Left cardiac atrium (tissue), 4 donors: ENCODE measurements at regions of chr20 and their contacts with region 1.

Region 1: DNA sequence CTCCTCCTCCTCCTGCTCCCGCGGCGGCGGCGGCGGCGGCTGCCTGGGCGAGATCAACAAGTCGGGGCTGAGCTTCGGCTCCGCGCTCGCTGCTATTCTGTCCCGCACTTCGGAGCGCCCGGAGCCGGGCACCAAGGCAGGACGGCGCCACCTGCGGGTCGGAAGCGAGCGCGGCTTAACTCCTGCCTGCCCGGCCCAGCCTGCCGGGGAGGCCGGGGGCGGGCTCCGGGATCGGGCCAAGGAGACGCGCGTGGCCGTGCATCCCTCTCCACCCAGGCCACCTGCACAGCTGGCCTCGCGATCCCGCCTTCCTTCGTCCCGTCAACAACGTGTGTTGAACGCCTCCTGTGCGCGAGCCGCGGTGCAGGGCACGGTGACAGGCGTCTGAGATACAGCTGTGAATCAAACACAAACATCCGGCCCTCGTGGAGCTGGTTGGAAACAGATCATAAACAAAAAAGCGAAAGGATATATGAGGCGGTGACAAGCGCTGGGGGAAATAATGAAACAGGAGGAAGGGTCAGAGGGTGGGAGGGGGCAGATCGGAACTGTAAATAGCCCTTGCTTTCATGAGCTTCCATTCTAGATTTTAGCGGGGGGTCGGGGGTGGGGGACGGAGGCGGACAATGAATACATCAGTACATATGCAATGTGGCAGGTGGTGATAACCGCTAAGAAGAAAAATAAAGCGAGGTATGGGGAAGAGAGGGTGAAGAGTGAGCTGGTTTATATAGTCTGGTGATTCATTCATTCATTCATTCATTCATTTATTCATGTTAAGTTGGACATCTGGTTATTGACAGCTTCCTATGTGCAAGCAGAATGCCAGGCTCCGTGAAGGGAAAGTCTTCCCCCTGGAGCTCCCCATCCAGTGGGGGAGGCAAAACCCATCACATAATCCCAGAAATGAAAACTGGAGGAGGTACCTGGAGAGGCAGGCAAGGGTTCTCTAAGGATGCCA is 2.0 kb upstream of the KCNB1 start:
- DNase-seq: peak; percentile 84
- ATAC-seq: peak; percentile 89 to 92

Region 2: DNA sequence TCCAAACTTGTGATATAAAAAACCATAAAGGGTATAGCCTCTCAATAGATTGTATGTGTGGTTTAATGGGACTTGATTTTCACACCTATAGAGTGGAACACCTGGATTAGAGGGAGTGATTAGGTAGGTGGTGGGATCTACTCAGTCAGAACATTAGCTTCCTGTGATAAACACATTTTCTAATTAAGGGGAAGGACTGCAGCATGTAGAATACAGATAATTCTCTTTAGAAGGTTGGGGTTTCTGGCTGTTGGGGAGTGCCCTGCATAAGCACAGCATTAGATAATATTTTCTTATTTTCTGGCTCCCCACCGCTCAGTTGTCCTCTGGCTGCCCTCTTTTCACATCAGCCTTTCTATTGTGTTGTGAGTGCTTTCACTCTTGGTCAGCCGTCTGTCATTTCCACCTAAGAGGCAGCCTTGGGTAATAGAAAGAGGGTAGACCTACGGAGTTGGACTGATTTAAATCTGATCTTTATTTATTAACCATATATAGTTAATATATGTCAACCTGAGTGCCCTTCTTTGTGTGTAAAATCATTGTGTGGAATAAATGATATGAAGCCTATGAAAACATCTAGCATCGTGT is 430.3 kb before region 1 on chr20:
- intact Hi-C with region 1: no loop called
- DNase-seq: no peak
- ATAC-seq: no peak

Region 3: GRCh38 chr20:49323622-49324238 is 160.7 kb before region 1 on chr20:
- intact Hi-C with region 1: no loop called
- DNase-seq: peak; percentile 33
- ATAC-seq: peak; percentile 61 to 63

Region 4: DNA sequence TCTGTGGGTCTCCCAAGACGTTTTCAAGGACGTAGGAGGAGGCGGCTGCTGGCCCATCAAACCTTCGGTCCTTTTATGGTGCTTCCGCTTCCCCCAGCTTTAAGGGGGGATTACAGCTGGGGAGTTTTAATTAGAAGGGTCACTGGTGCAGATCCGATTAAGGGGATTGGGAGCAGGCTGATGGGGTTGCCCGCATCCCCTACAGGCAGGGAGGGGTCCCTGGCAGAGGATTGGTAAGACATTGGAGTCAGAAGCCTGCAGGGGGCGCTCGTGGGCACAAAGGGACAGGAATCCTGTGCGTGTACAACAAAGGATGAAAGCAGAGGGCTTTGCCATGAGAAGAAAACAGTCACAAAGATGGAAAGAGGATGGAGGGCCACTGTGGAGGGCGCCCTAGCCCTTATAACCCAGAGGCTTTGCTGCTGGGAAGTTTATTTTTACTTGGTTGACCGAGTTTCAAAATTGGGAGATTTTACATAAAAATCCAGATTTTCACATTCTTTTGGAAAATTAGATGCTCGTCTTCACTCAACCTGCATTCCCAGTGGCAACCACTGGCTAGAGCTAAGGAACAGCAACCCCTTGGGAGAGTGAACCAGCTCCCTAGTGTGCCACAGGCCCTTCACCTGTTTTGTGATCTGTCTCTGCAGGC is 99.9 kb before region 1 on chr20:
- intact Hi-C with region 1: loop called (anchors 5 to 10 kb)
- DNase-seq: peak; percentile 76
- ATAC-seq: peak; percentile 33